GM12878 (cell line): ENCODE measurements at regions of chr18 and their contacts with region 1.

Region 1: DNA sequence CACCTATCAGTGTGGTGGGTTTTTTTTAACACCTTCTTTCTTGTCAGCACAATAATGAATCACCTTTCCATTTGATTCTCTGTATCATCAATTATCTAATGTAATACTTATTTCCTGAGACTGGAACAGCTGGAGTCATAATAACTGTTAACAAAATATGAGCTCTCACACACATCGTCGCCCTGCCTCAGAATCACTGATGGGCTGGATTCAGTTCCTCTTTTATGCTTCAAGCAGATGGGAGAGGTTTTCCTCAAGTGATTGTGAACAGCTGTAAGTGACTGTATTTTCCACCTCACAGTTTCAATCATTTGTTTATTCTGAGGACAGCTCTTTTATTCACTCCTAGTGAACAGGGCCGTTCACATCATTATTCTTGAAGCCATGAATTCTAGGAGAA is 330.2 kb downstream of the DSC3 start:
- DNase-seq: peak; percentile 9
- ATAC-seq: peak; percentile 98
- H3K4me3 ChIP-seq: no peak overlapping the region
- H3K27ac ChIP-seq: no peak overlapping the region
- H3K4me1 ChIP-seq: no peaks in the 10 kb centered on the region
- H3K27me3 ChIP-seq: no peaks in the 10 kb centered on the region
- CTCF ChIP-seq: no peak
- EP300 ChIP-seq: peak in 1 of 2 experiments; percentile 62; a peak in 1 of 4 replicates
- POLR2A ChIP-seq: no peak
- RAD21 ChIP-seq: no peak

Region 2: DNA sequence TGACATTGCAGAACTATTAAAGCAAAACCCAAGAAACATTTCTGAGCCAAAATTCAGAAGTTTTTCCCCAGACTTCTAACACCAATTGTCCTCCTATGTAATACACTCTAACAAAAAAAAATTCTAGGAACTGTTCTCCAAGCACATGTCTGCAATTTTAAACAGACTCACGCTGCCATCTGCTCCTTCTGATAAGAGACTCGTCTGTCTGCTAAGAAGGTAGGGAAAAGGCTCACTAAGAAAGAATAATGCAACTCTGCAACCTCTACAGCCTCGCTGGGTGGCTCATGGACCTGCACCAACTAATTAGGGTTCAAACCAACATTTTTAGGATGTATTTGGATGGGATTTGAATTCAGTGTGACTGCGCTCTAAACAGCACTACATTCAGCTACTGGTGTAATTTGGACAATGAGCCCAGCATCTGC is 36.3 kb before region 1 on chr18:
- CTCF ChIA-PET with region 1: interaction called, 7 read pairs
- POLR2A ChIA-PET with region 1: interaction called, 6 read pairs
- RAD21 ChIA-PET with region 1: interaction called, 5 read pairs
- SMC1A ChIA-PET with region 1: interaction called, 12 read pairs
- in situ Hi-C with region 1: no loop called
- intact Hi-C with region 1: no loop called
- DNase-seq: no peak
- ATAC-seq: no peak; the same call in 2 of the 3 replicates
- H3K4me3 ChIP-seq: no peak overlapping the region
- H3K27ac ChIP-seq: no peak overlapping the region
- H3K4me1 ChIP-seq: no peaks in the 10 kb centered on the region
- H3K27me3 ChIP-seq: no peaks in the 10 kb centered on the region
- CTCF ChIP-seq: no peak
- EP300 ChIP-seq: no peak
- POLR2A ChIP-seq: no peak
- RAD21 ChIP-seq: no peak

Region 3: DNA sequence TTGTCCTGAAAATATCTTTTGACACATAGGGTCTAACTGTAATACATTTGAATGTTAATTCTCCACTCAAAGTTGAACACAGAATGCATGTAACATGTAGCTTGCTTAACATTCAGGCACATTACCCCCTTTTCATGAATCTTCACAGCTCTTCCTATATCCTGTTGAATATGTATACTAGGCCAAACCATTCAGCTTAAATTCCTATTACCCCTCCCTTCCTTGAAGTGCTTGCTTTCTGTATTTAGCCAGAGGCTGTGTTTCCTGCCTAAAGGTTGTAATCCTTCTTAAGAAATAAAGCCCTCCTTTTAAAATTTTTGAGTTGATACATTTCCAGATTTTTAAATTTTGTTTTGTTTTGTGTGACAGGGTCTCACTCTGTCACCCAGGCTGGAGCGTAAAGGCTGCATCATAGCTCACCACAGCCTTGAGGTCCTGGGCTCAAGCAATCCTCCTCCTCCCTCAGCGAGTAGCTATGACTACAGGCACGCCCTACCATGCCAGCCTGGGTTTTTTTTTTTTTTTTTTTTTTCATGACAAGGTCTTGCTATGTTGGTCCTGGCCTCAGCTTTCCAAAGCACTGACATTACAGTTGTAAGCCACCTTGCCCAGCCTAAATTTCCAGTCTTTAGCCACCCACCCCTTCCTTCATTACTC is 27.4 kb before region 1 on chr18:
- CTCF ChIA-PET with region 1: no interaction called
- POLR2A ChIA-PET with region 1: no interaction called
- RAD21 ChIA-PET with region 1: interaction called, 5 read pairs
- SMC1A ChIA-PET with region 1: interaction called, 13 read pairs
- in situ Hi-C with region 1: no loop called
- intact Hi-C with region 1: no loop called
- DNase-seq: no peak
- ATAC-seq: peak; percentile 30; the same call in 1 of the 3 replicates
- H3K4me3 ChIP-seq: no peak overlapping the region
- H3K27ac ChIP-seq: no peak overlapping the region
- H3K4me1 ChIP-seq: no peaks in the 10 kb centered on the region
- H3K27me3 ChIP-seq: no peaks in the 10 kb centered on the region
- CTCF ChIP-seq: no peak
- EP300 ChIP-seq: no peak
- POLR2A ChIP-seq: no peak
- RAD21 ChIP-seq: no peak

Region 4: DNA sequence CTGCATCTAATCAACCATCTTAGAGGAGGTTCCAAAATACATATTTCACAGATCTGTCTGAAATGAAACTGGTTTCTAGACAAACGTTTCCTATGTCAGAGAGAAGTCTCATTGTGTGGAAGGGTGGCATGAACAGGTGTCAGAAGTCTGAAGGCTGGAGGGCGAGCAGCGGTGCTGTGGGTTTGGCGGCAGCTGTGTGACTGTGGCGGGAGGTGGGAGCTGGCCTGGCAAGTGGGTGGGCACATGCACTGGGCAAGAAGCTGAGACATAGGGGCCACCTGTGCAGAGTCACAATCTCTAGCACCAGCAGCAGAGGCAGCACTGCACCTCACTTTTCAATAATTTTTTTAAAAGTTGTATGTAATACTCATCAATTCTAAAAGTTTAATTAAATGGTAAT is 16.2 kb before region 1 on chr18:
- CTCF ChIA-PET with region 1: interaction called, 5 read pairs
- POLR2A ChIA-PET with region 1: no interaction called
- RAD21 ChIA-PET with region 1: interaction called, 6 read pairs
- SMC1A ChIA-PET with region 1: interaction called, 35 read pairs
- in situ Hi-C with region 1: no loop called
- intact Hi-C with region 1: no loop called
- DNase-seq: no peak
- ATAC-seq: no peak
- H3K4me3 ChIP-seq: no peak overlapping the region
- H3K27ac ChIP-seq: no peak overlapping the region
- H3K4me1 ChIP-seq: no peaks in the 10 kb centered on the region
- H3K27me3 ChIP-seq: no peaks in the 10 kb centered on the region
- CTCF ChIP-seq: no peak
- EP300 ChIP-seq: no peak
- POLR2A ChIP-seq: no peak
- RAD21 ChIP-seq: no peak